ENCODE measurements at regions of chr21 and their contacts with region 1.

Region 1: GRCh38 chr21:34129039-34129891 is 55.9 kb downstream of the MRPS6 start:
- DNase-seq: peak; percentile 87
- ATAC-seq: peak; percentile 94
- H3K4me3 Mint-ChIP-seq: peak overlapping the region; percentile 60
- H3K27ac Mint-ChIP-seq: peak overlapping the region; percentile 94
- H3K4me1 Mint-ChIP-seq: peaks cover 89% of the 10 kb centered on the region
- H3K27me3 Mint-ChIP-seq: no peaks in the 10 kb centered on the region

Region 2: GRCh38 chr21:33968080-33968994 is 160.9 kb before region 1 on chr21:
- CTCF ChIA-PET with region 1: no interaction called
- POLR2A ChIA-PET with region 1: no interaction called
- intact Hi-C with region 1: no loop called
- DNase-seq: peak; percentile 38
- ATAC-seq: peak; percentile 60
- H3K4me3 Mint-ChIP-seq: no peak overlapping the region
- H3K27ac Mint-ChIP-seq: peak overlapping the region; percentile 7
- H3K4me1 Mint-ChIP-seq: peaks cover 21% of the 10 kb centered on the region
- H3K27me3 Mint-ChIP-seq: no peaks in the 10 kb centered on the region

Region 3: GRCh38 chr21:34154878-34155277 is 25.6 kb after region 1 on chr21:
- CTCF ChIA-PET with region 1: interaction called, 10 read pairs
- POLR2A ChIA-PET with region 1: interaction called, 3 read pairs
- intact Hi-C with region 1: no loop called
- DNase-seq: peak; percentile 53
- ATAC-seq: peak; percentile 83
- H3K4me3 Mint-ChIP-seq: no peak overlapping the region
- H3K27ac Mint-ChIP-seq: peak overlapping the region; percentile 82
- H3K4me1 Mint-ChIP-seq: peaks cover 35% of the 10 kb centered on the region
- H3K27me3 Mint-ChIP-seq: no peaks in the 10 kb centered on the region

Region 4: DNA sequence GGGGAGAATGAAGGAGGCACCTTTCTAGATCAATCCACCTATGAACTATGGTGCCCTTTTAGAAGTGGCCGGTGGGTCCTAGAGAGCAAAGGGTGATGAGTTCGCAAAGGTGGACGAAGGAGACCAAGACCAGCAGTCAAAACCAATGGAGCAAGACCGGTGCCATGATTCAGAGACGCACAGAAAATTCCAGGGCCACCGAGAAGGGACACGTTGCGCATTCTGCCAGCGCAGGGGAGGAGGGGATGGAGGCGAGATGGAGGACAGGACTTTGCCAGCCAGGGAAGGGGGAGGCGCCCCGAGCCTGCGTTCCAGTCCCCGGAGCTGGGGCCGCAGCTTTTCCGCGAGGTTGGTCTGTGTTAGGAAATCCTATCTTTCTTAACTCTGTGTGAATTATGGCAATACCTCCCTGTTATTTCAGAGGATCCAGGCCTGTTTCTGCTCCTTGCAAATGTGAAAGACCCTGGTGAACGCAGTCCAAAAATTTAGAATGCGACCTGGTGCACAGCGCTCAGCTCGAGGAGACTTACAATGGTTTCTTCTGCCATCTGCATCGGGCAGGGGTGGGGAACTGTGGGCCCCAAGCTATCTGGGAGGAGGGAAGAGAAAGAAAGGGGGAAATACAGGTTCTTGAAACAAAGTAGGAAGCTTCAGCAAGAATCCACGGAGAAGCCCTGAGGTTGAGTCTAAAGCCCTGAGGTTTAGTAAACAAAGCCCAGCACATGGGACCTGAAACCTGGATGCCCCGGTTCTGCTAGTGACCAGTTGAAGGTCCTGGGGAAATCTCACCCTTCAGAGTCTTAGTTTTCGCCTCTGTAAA is 73.5 kb after region 1 on chr21:
- CTCF ChIA-PET with region 1: interaction called, 7 read pairs
- POLR2A ChIA-PET with region 1: interaction called, 4 read pairs
- intact Hi-C with region 1: loop called (anchors 2 to 5 kb)
- DNase-seq: no peak
- ATAC-seq: no peak
- H3K4me3 Mint-ChIP-seq: peak overlapping the region; percentile 70
- H3K27ac Mint-ChIP-seq: no peak overlapping the region
- H3K4me1 Mint-ChIP-seq: peaks cover 40% of the 10 kb centered on the region
- H3K27me3 Mint-ChIP-seq: peaks cover 3% of the 10 kb centered on the region

Measured in activated CD4-positive, alpha-beta T cell treated with anti-CD3 and anti-CD28 coated beads for 36 hours (primary cell).